CD8-positive, alpha-beta T cell (primary cell): ENCODE measurements at regions of chr1 and their contacts with region 1.

Region 1: GRCh38 chr1:154430903-154431302 is 25.8 kb downstream of the IL6R start:
- DNase-seq: no peak
- ATAC-seq: no peak
- H3K4me3 ChIP-seq: no peak overlapping the region
- H3K4me3 Mint-ChIP-seq: no peak overlapping the region
- H3K27ac ChIP-seq: peak overlapping the region in 1 of 2 experiments; percentile 21
- H3K27ac Mint-ChIP-seq: no peak overlapping the region
- H3K4me1 ChIP-seq: peaks cover 18% of the 10 kb centered on the region
- H3K4me1 Mint-ChIP-seq: peaks cover 31% of the 10 kb centered on the region
- H3K27me3 ChIP-seq: no peaks in the 10 kb centered on the region
- H3K27me3 Mint-ChIP-seq: no peaks in the 10 kb centered on the region
- CTCF ChIP-seq: no peak

Region 2: GRCh38 chr1:154419620-154420571 is 11.0 kb before region 1 on chr1:
- CTCF ChIA-PET with region 1: interaction called, 10 read pairs
- POLR2A ChIA-PET with region 1: interaction called, 4 read pairs
- intact Hi-C with region 1: no loop called
- DNase-seq: peak in 7 of 9 experiments; percentile 21 to 76 (median 53)
- ATAC-seq: peak; percentile 71
- H3K4me3 ChIP-seq: peak overlapping the region in 1 of 2 experiments; percentile 39
- H3K4me3 Mint-ChIP-seq: peak overlapping the region; percentile 76
- H3K27ac ChIP-seq: peak overlapping the region; percentile 29 to 46
- H3K27ac Mint-ChIP-seq: peak overlapping the region; percentile 94
- H3K4me1 ChIP-seq: peaks cover 60% of the 10 kb centered on the region
- H3K4me1 Mint-ChIP-seq: peaks cover 66% of the 10 kb centered on the region
- H3K27me3 ChIP-seq: no peaks in the 10 kb centered on the region
- H3K27me3 Mint-ChIP-seq: no peaks in the 10 kb centered on the region
- CTCF ChIP-seq: no peak